CD8-positive, alpha-beta T cell (primary cell): ENCODE measurements at regions of chr10 and their contacts with region 1.

Region 1: GRCh38 chr10:11335167-11335652 is 276.2 kb downstream of the USP6NL start:
- DNase-seq: peak in 1 of 9 experiments; percentile 48
- ATAC-seq: no peak
- H3K4me3 ChIP-seq: no peak overlapping the region
- H3K4me3 Mint-ChIP-seq: no peak overlapping the region
- H3K27ac ChIP-seq: no peak overlapping the region
- H3K27ac Mint-ChIP-seq: peak overlapping the region; percentile 80
- H3K4me1 ChIP-seq: peaks cover 14% of the 10 kb centered on the region
- H3K4me1 Mint-ChIP-seq: peaks cover 47% of the 10 kb centered on the region
- H3K27me3 ChIP-seq: no peaks in the 10 kb centered on the region
- H3K27me3 Mint-ChIP-seq: no peaks in the 10 kb centered on the region
- CTCF ChIP-seq: no peak

Region 2: GRCh38 chr10:11373619-11374235 is 38.5 kb after region 1 on chr10:
- CTCF ChIA-PET with region 1: no interaction called
- POLR2A ChIA-PET with region 1: interaction called, 11 read pairs
- intact Hi-C with region 1: no loop called
- DNase-seq: no peak
- ATAC-seq: no peak
- H3K4me3 ChIP-seq: no peak overlapping the region
- H3K4me3 Mint-ChIP-seq: no peak overlapping the region
- H3K27ac ChIP-seq: no peak overlapping the region
- H3K27ac Mint-ChIP-seq: no peak overlapping the region
- H3K4me1 ChIP-seq: no peaks in the 10 kb centered on the region
- H3K4me1 Mint-ChIP-seq: peaks cover 12% of the 10 kb centered on the region
- H3K27me3 ChIP-seq: no peaks in the 10 kb centered on the region
- H3K27me3 Mint-ChIP-seq: no peaks in the 10 kb centered on the region
- CTCF ChIP-seq: no peak

Region 3: DNA sequence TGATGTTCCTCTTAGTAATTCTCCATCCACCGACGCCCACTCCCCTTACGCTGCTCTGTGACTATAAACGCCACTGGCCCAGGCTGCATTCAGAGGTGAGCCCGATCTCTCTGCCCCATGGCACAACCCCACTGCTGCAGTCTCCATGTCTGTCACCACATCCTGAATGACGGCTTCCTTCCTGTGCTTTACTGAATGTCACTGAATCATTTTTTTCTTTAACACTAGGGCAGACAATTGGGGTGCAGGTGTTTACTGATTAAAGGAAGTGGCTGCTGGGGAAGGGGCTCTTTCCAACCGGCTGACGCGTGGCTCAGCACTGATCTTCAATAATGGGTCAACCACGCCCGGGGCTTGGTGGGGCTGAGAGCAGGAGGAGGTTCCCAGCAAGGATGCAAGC is 67.9 kb after region 1 on chr10:
- CTCF ChIA-PET with region 1: no interaction called
- POLR2A ChIA-PET with region 1: interaction called, 3 read pairs
- intact Hi-C with region 1: loop called in 1 of 2 experiments (anchors 5 kb)
- DNase-seq: peak; percentile 23 to 88 (median 65)
- ATAC-seq: peak; percentile 92
- H3K4me3 ChIP-seq: peak overlapping the region in 1 of 2 experiments; percentile 10
- H3K4me3 Mint-ChIP-seq: peak overlapping the region; percentile 69
- H3K27ac ChIP-seq: peak overlapping the region; percentile 58 to 79
- H3K27ac Mint-ChIP-seq: peak overlapping the region; percentile 95
- H3K4me1 ChIP-seq: peaks cover 49% of the 10 kb centered on the region
- H3K4me1 Mint-ChIP-seq: peaks cover 81% of the 10 kb centered on the region
- H3K27me3 ChIP-seq: no peaks in the 10 kb centered on the region
- H3K27me3 Mint-ChIP-seq: no peaks in the 10 kb centered on the region
- CTCF ChIP-seq: no peak

Region 4: GRCh38 chr10:11472158-11472753 is 137.0 kb after region 1 on chr10:
- CTCF ChIA-PET with region 1: no interaction called
- POLR2A ChIA-PET with region 1: no interaction called
- intact Hi-C with region 1: loop called in 1 of 2 experiments (anchors 10 kb)
- DNase-seq: peak; percentile 51 to 85 (median 70)
- ATAC-seq: peak; percentile 97
- H3K4me3 ChIP-seq: no peak overlapping the region
- H3K4me3 Mint-ChIP-seq: no peak overlapping the region
- H3K27ac ChIP-seq: no peak overlapping the region
- H3K27ac Mint-ChIP-seq: no peak overlapping the region
- H3K4me1 ChIP-seq: no peaks in the 10 kb centered on the region
- H3K4me1 Mint-ChIP-seq: peaks cover 1% of the 10 kb centered on the region
- H3K27me3 ChIP-seq: no peaks in the 10 kb centered on the region
- H3K27me3 Mint-ChIP-seq: no peaks in the 10 kb centered on the region
- CTCF ChIP-seq: peak; percentile 97

Region 5: GRCh38 chr10:11539191-11539868 is 204.1 kb after region 1 on chr10:
- CTCF ChIA-PET with region 1: no interaction called
- POLR2A ChIA-PET with region 1: no interaction called
- intact Hi-C with region 1: no loop called
- DNase-seq: no peak
- ATAC-seq: no peak
- H3K4me3 ChIP-seq: no peak overlapping the region
- H3K4me3 Mint-ChIP-seq: no peak overlapping the region
- H3K27ac ChIP-seq: no peak overlapping the region
- H3K27ac Mint-ChIP-seq: no peak overlapping the region
- H3K4me1 ChIP-seq: no peaks in the 10 kb centered on the region
- H3K4me1 Mint-ChIP-seq: peaks cover under 1% of the 10 kb centered on the region
- H3K27me3 ChIP-seq: no peaks in the 10 kb centered on the region
- H3K27me3 Mint-ChIP-seq: no peaks in the 10 kb centered on the region
- CTCF ChIP-seq: no peak